ENCODE measurements at regions of chr7 and their contacts with region 1.

Region 1: GRCh38 chr7:106504645-106505044 is 156.3 kb downstream of the CCDC71L start:
- DNase-seq: no peak
- H3K4me3 ChIP-seq: no peak overlapping the region
- H3K27ac ChIP-seq: no peak overlapping the region
- H3K4me1 ChIP-seq: no peaks in the 10 kb centered on the region
- H3K27me3 ChIP-seq: no peaks in the 10 kb centered on the region
- CTCF ChIP-seq: no peak

Region 2: GRCh38 chr7:106260136-106260561 is 244.5 kb before region 1 on chr7:
- CTCF ChIA-PET with region 1: no interaction called
- POLR2A ChIA-PET with region 1: interaction called, 16 read pairs
- intact Hi-C with region 1: no loop called
- DNase-seq: no peak
- H3K4me3 ChIP-seq: no peak overlapping the region
- H3K27ac ChIP-seq: 0 out of 2 replicates have a peak overlapping the region, but pooled peaks have one; percentile 6
- H3K4me1 ChIP-seq: no peaks in the 10 kb centered on the region
- H3K27me3 ChIP-seq: no peaks in the 10 kb centered on the region
- CTCF ChIP-seq: no peak

Measured in PC-9 (cell line).